Gastrocnemius medialis (tissue), 4 donors: ENCODE measurements at regions of chr13 and their contacts with region 1.

Region 1: GRCh38 chr13:35940734-35941133 is 190.4 kb downstream of the DCLK1 start:
- DNase-seq: no peak
- ATAC-seq: no peak
- H3K4me3 ChIP-seq: no peak overlapping the region
- H3K27ac ChIP-seq: no peak overlapping the region
- H3K4me1 ChIP-seq: no peaks in the 10 kb centered on the region
- H3K27me3 ChIP-seq: no peaks in the 10 kb centered on the region
- CTCF ChIP-seq: no peak
- POLR2A ChIP-seq: no peak

Region 2: DNA sequence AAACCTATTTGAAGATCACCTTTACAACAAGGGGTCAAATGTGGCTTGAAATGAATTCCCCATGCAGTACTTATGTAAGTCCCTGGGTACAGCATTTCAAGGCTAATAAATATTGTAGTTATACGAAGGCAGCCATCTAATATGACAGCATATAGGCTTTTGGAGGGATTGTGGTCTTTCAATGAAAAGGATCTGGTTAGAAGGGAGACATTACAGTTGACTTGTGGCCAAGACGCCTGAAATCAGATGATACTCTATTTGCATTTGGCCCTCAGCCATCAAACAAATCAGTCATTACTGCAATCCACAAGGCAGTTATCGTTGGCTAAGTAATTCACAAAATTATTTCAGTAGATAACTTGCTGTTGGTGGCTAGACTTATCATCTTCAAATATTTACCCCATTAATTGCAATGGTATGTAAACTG is 52.3 kb before region 1 on chr13:
- in situ Hi-C with region 1: loop called in 1 of 4 experiments (anchors 10 kb)
- intact Hi-C with region 1: no loop called
- DNase-seq: no peak
- ATAC-seq: no peak
- H3K4me3 ChIP-seq: no peak overlapping the region
- H3K27ac ChIP-seq: no peak overlapping the region
- H3K4me1 ChIP-seq: no peaks in the 10 kb centered on the region
- H3K27me3 ChIP-seq: no peaks in the 10 kb centered on the region
- CTCF ChIP-seq: no peak
- POLR2A ChIP-seq: no peak

Region 3: DNA sequence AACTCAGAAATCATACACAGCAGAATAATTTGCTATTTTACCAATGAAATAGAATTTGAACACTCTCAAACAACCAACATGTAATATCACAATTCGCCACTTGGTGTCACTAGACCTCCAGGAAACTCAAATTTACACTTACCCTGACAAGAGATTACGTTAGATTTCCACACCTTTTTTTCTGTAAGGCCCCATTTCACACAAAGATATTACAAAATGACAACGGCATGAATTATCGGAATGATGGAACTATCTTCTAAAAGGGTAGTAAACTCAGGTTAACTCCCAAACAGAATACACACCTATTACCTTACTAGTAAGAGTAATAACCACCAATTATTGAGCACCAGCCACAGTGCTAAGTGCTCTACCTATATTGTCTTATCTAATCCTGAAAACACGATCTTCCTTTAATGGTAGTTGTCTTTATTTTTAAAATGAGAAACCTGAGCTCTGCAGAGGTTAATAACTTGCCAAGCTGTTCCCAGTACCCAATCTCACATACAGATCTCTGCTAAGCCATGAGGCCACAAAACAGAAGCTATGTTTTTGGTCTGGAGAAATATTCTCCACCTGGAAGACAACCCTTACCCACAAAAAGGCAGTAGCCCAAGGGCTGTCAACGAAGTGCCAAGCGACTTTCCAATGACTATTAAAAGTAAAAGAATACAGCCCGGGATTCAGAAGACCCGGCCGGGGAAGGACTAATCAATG is 38.0 kb after region 1 on chr13:
- in situ Hi-C with region 1: no loop called
- intact Hi-C with region 1: no loop called
- DNase-seq: no peak
- ATAC-seq: peak; percentile 56 to 65
- H3K4me3 ChIP-seq: no peak overlapping the region
- H3K27ac ChIP-seq: peak overlapping the region; percentile 25 to 72 (median 60)
- H3K4me1 ChIP-seq: no peaks in the 10 kb centered on the region
- H3K27me3 ChIP-seq: no peaks in the 10 kb centered on the region
- CTCF ChIP-seq: peak; percentile 75 to 85 (median 78)
- POLR2A ChIP-seq: no peak